Activated T-helper 1 cell treated with anti-CD3 and anti-CD28 coated beads, Interleukin-12 subunit alpha, Interleukin-12 subunit beta, Interleukin-2, Interleukin-4 antibody, amounts not matched to agents 30 ng/mL and 10 ng/mL and 1 ng/mL, durations not matched to agents 14 hours and 24 hours and 36 hours (primary cell): ENCODE measurements at regions of chr2 and their contacts with region 1.

Region 1: DNA sequence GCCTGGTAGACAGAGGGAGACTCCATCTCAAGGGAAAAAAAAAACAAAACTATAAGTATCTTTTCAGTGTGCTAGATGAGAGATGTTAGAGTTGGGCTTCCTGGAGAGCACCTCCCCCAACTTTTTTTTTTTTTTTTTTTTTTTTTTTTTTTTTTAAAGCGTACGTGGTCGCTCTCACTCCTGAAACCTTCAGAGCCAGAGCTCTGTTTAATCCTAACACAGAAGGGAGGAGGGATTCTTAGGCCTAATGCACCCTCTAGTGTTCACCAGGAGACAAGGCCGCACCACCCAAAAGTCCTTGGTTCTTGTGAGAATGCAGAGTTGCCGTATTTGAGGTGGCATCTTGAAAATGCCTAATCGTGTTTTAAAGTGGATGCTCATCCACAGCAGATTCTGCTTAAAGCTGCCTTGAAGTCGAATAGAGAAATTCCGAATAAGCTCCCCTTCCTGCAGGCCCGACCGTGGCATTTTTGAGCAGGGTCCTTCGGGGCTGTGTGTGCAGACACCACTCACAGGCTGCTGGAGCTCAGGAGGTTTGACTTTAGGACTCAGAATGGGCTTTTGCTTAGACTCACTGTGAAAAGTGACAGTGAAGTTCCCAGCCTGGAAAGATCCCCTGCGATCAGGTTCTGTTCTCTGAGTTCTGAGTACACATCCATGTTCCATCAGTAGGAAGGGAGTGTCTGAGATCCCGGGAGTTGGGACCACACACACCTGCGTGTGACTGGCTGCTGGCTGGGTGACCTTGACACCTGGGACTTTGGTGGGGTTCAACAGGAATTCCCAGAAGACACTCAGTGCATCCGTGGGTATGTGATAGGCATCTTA is 252.6 kb downstream of the AGAP1 start:
- DNase-seq: peak; percentile 34
- H3K4me3 Mint-ChIP-seq: no peak overlapping the region
- H3K27ac Mint-ChIP-seq: no peak overlapping the region
- H3K4me1 Mint-ChIP-seq: no peaks in the 10 kb centered on the region
- H3K27me3 Mint-ChIP-seq: peaks cover 3% of the 10 kb centered on the region

Region 2: GRCh38 chr2:235135990-235136561 is 610.4 kb before region 1 on chr2:
- intact Hi-C with region 1: loop called (anchors 1 kb)
- DNase-seq: peak; percentile 14
- H3K4me3 Mint-ChIP-seq: no peak overlapping the region
- H3K27ac Mint-ChIP-seq: no peak overlapping the region
- H3K4me1 Mint-ChIP-seq: no peaks in the 10 kb centered on the region
- H3K27me3 Mint-ChIP-seq: peaks cover 13% of the 10 kb centered on the region